ENCODE measurements at regions of chr12 and their contacts with region 1.

Region 1: GRCh38 chr12:65823513-65824375 is 539 bp upstream of the HMGA2 start:
- DNase-seq: peak; percentile 92
- H3K4me3 ChIP-seq: peak overlapping the region; percentile 85
- H3K27ac ChIP-seq: peak overlapping the region; percentile 95
- H3K4me1 ChIP-seq: peaks cover 18% of the 10 kb centered on the region
- H3K27me3 ChIP-seq: no peaks in the 10 kb centered on the region
- CTCF ChIP-seq: no peak

Region 2: DNA sequence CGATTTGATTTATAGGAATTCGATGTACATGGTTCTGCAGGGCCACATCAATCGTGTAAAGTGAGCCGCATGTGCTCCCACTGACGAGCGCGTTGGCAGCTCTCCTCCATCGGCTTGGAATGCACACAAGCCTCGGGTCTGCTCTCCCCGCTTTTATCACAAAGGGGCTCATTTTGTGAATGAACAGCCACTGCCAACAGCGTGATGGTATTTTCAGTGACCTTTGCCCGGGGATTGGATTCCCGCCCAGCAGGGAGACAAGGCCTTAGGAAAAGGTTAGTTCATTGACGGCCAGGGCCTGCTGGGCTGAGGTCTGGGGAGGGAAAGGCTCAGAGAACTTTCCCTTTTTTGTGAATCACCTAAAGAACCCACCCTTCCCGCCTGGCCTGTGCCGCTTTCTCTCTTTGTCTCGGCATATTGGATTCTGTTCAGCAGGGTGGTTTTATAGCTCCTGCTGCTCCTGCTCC is 313.1 kb before region 1 on chr12:
- CTCF ChIA-PET with region 1: no interaction called
- POLR2A ChIA-PET with region 1: no interaction called
- intact Hi-C with region 1: loop called (anchors 5 kb)
- DNase-seq: peak; percentile 72
- H3K4me3 ChIP-seq: peak overlapping the region; percentile 11
- H3K27ac ChIP-seq: peak overlapping the region; percentile 57
- H3K4me1 ChIP-seq: peaks cover 23% of the 10 kb centered on the region
- H3K27me3 ChIP-seq: no peaks in the 10 kb centered on the region
- CTCF ChIP-seq: no peak

Region 3: DNA sequence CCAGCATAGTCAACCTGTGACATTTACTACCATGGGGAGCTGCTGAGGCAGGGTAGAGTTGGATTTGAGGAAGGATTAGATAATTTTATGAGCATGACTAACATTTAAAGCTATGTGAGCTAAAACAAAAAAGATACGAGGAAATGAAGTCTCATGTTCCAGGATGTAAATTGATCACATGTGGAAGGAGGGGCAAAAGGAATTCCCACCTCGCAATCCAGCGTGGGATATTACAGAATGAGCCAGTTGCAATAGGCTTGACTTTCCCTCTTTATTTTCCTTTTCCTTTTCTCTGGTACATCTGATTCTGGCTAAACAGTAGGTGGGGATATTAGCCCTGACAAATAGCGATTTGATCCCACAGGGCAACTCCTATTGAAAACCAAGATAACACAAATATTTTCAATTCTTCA is 214.4 kb before region 1 on chr12:
- CTCF ChIA-PET with region 1: no interaction called
- POLR2A ChIA-PET with region 1: no interaction called
- intact Hi-C with region 1: loop called (anchors 5 kb)
- DNase-seq: peak; percentile 62
- H3K4me3 ChIP-seq: no peak overlapping the region
- H3K27ac ChIP-seq: no peak overlapping the region
- H3K4me1 ChIP-seq: peaks cover 32% of the 10 kb centered on the region
- H3K27me3 ChIP-seq: no peaks in the 10 kb centered on the region
- CTCF ChIP-seq: 0 out of 2 replicates have a peak, but pooled peaks have one; percentile 20

Region 4: GRCh38 chr12:65930114-65930828 is 106.5 kb after region 1 on chr12:
- CTCF ChIA-PET with region 1: no interaction called
- POLR2A ChIA-PET with region 1: interaction called, 3 read pairs
- intact Hi-C with region 1: loop called (anchors 2 kb)
- DNase-seq: peak; percentile 92
- H3K4me3 ChIP-seq: peak overlapping the region; percentile 13
- H3K27ac ChIP-seq: peak overlapping the region; percentile 95
- H3K4me1 ChIP-seq: peaks cover 94% of the 10 kb centered on the region
- H3K27me3 ChIP-seq: no peaks in the 10 kb centered on the region
- CTCF ChIP-seq: no peak

Region 5: GRCh38 chr12:66087365-66087943 is 263.7 kb after region 1 on chr12:
- CTCF ChIA-PET with region 1: no interaction called
- POLR2A ChIA-PET with region 1: no interaction called
- intact Hi-C with region 1: loop called (anchors 5 kb)
- DNase-seq: peak; percentile 88
- H3K4me3 ChIP-seq: no peak overlapping the region
- H3K27ac ChIP-seq: peak overlapping the region; percentile 42
- H3K4me1 ChIP-seq: peaks cover 26% of the 10 kb centered on the region
- H3K27me3 ChIP-seq: no peaks in the 10 kb centered on the region
- CTCF ChIP-seq: peak; percentile 91